HEK293 (cell line): ENCODE measurements at regions of chr16 and their contacts with region 1.

Region 1: GRCh38 chr16:65671-66137 is 6.7 kb downstream of the RHBDF1 start:
- H3K4me3 ChIP-seq: no peak overlapping the region
- H3K27ac ChIP-seq: no peak overlapping the region
- H3K4me1 ChIP-seq: no peaks in the 10 kb centered on the region
- CTCF ChIP-seq: peak; percentile 98

Region 2: DNA sequence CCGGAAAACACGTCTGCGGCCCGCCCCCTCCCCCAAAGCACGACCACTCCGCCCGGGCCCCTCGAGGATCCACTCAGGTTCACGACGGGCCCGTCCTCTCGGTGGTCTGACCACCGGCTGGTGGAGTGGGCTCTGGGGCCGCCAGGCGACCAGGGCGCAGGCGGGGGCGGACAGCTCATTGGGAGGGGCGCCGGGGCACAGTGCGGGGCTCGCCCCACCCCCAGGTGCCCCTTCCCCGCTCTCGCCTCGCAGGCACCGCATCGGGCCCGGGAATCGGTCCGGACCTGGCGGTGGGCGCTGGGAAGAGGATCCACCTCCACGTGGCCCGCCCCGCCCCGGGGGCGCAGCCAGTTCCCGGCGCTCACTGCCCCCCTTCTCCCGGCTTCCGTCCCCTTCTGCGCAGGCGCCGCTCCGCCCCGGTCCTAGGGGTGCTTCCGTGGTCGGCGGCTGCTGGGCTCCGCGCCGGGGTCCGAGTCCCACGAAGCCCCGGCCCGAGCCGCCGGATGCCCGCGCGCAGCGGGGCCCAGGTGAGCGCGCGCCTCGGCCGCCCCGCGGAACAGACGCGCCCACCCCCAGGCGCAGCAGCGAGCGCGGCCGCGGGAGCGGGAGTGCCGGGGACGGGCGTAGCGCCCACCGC is 12.2 kb after region 1 on chr16 and contains the start of gene MPG:
- CTCF ChIA-PET with region 1: interaction called, 25 read pairs
- POLR2A ChIA-PET with region 1: interaction called, 3 read pairs
- H3K4me3 ChIP-seq: peak within 1 kb of the TSS; percentile 53
- H3K27ac ChIP-seq: peak within 1 kb of the TSS; percentile 73; the same call in 1 of the 2 replicates
- H3K4me1 ChIP-seq: peaks cover 15% of the 10 kb centered on the region
- CTCF ChIP-seq: no peak

Region 3: GRCh38 chr16:91484-91883 is 25.8 kb after region 1 on chr16:
- CTCF ChIA-PET with region 1: interaction called, 245 read pairs
- POLR2A ChIA-PET with region 1: interaction called, 7 read pairs
- H3K4me3 ChIP-seq: no peak overlapping the region
- H3K27ac ChIP-seq: 0 out of 2 replicates have a peak overlapping the region, but pooled peaks have one; percentile 24
- H3K4me1 ChIP-seq: no peaks in the 10 kb centered on the region; the same call in 1 of the 2 replicates
- CTCF ChIP-seq: no peak

Region 4: GRCh38 chr16:106623-107324 is 41.1 kb after region 1 on chr16:
- CTCF ChIA-PET with region 1: interaction called, 80 read pairs
- POLR2A ChIA-PET with region 1: interaction called, 3 read pairs
- H3K4me3 ChIP-seq: no peak overlapping the region
- H3K27ac ChIP-seq: no peak overlapping the region
- H3K4me1 ChIP-seq: no peaks in the 10 kb centered on the region
- CTCF ChIP-seq: peak; percentile 75

Region 5: DNA sequence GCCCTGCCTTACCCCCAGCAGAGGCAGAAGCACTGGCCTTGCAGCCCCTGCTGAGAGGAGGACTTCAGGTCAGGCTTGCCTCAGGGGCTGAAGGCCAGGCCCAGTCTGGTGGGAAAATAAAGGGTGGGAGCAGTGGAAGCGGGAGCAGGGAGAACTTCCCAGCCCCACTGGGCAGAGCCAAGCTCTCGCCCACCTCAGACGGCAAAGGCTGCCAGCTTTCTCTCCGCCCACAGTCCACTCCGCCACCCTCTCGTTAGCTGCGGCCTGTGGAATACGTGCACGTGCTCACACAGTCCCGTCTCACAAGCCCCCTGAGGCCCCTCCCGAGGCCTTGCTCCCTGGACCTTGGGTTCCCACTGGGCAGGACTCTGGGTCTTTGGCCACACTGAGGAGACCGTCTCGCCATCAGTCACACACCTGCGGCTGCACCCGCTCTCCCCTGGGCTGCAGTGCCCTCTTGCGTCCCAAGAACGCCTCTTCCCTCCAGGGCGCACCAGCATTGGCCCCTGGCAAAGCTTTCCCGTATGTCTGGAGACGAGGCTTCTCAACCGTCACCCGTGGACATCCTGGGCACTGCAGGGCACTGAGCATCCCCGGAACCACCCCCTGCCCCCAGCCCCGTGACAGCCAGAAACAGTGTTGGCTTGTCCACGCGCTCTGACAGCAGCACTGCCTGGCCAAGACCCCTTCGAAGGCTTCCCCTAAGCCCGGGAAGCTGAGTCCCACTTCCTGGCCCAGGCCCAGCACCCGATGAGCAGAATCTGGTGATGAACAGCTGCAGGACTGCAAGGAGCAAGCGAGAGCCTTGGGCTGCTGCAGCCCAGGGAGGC is 296.4 kb after region 1 on chr16:
- CTCF ChIA-PET with region 1: interaction called, 40 read pairs
- POLR2A ChIA-PET with region 1: interaction called, 3 read pairs
- H3K4me3 ChIP-seq: no peak overlapping the region
- H3K27ac ChIP-seq: no peak overlapping the region
- H3K4me1 ChIP-seq: no peaks in the 10 kb centered on the region; the same call in 1 of the 2 replicates
- CTCF ChIP-seq: peak; percentile 95